ENCODE measurements at regions of chr18 and their contacts with region 1.

Region 1: GRCh38 chr18:48100651-48101165 is 170.2 kb upstream of the SMAD2 start:
- DNase-seq: no peak
- ATAC-seq: no peak
- H3K4me3 ChIP-seq: no peak overlapping the region
- H3K27ac ChIP-seq: no peak overlapping the region
- H3K4me1 ChIP-seq: no peaks in the 10 kb centered on the region
- H3K27me3 ChIP-seq: no peaks in the 10 kb centered on the region
- CTCF ChIP-seq: no peak
- POLR2A ChIP-seq: no peak

Region 2: GRCh38 chr18:48222118-48222517 is 121.4 kb after region 1 on chr18:
- in situ Hi-C with region 1: loop called in 1 of 4 experiments (anchors 25 kb)
- intact Hi-C with region 1: no loop called
- DNase-seq: peak; percentile 53 to 68
- ATAC-seq: peak; percentile 88 to 96
- H3K4me3 ChIP-seq: no peak overlapping the region
- H3K27ac ChIP-seq: no peak overlapping the region
- H3K4me1 ChIP-seq: no peaks in the 10 kb centered on the region
- H3K27me3 ChIP-seq: no peaks in the 10 kb centered on the region
- CTCF ChIP-seq: no peak
- POLR2A ChIP-seq: no peak

Measured in gastrocnemius medialis (tissue), 4 donors.